ENCODE measurements at regions of chr15 and their contacts with region 1.

Region 1: GRCh38 chr15:40941528-40942336 is 11.5 kb upstream of the CHAC1 start:
- DNase-seq: peak; percentile 78
- ATAC-seq: peak; percentile 81
- H3K4me3 Mint-ChIP-seq: peak overlapping the region; percentile 79
- H3K27ac Mint-ChIP-seq: peak overlapping the region; percentile 74
- H3K4me1 Mint-ChIP-seq: peaks cover 34% of the 10 kb centered on the region
- H3K27me3 Mint-ChIP-seq: no peaks in the 10 kb centered on the region
- CTCF ChIP-seq: peak; percentile 63

Region 2: GRCh38 chr15:40650479-40650878 is 291.3 kb before region 1 on chr15:
- CTCF ChIA-PET with region 1: no interaction called
- POLR2A ChIA-PET with region 1: no interaction called
- intact Hi-C with region 1: no loop called
- DNase-seq: no peak
- ATAC-seq: no peak
- H3K4me3 Mint-ChIP-seq: no peak overlapping the region
- H3K27ac Mint-ChIP-seq: no peak overlapping the region
- H3K4me1 Mint-ChIP-seq: no peaks in the 10 kb centered on the region
- H3K27me3 Mint-ChIP-seq: no peaks in the 10 kb centered on the region
- CTCF ChIP-seq: no peak

Region 3: DNA sequence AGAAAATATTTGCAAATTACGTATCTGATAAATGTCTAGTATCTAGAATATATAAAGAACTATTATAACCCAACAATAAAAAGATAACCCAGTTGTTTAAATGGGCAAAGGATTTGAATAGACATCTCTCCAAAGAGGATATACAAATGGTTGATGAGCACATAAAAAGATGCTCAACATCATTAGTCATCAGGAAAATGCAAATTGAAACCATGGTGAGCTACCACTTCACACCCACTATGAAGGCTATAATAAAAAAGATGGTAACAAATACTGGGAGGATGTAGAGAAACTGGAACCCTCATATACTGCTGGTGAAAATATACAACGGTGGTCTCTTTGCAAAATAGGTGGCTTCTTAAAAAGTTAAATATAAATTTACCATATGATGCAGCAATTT is 218.8 kb before region 1 on chr15:
- CTCF ChIA-PET with region 1: no interaction called
- POLR2A ChIA-PET with region 1: no interaction called
- intact Hi-C with region 1: no loop called
- DNase-seq: no peak
- ATAC-seq: peak; percentile 55
- H3K4me3 Mint-ChIP-seq: no peak overlapping the region
- H3K27ac Mint-ChIP-seq: no peak overlapping the region
- H3K4me1 Mint-ChIP-seq: peaks cover 17% of the 10 kb centered on the region
- H3K27me3 Mint-ChIP-seq: no peaks in the 10 kb centered on the region
- CTCF ChIP-seq: no peak

Region 4: DNA sequence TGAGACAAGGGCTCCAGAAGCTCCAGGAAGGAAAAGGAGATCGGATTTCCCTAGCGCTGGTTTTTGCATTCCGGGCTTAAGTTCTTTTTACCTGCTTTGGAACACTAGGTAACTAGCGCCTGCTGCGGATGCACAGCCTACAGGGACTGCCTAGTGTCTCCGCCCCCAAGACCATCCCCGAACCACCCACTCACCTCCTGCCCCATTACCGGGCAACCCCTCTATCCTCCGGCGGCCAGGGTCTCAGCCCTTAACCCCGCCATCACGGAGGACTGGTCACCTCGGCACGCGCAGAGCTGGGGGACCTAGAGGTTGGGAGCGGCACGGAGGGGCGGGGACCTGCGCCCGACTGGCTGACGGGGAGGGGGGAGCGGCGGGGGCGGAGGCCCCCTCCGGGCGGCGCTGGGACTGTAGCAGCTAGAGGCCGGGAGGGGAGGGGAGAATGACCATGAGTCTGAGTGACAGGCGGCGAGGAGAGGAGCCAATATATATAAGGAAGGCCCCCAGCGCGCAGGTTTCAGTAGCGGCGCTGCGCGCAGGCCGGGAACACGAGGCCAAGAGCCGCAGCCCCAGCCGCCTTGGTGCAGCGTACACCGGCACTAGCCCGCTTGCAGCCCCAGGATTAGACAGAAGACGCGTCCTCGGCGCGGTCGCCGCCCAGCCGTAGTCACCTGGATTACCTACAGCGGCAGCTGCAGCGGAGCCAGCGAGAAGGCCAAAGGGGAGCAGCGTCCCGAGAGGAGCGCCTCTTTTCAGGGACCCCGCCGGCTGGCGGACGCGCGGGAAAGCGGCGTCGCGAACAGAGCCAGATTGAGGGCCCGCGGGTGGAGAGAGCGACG is 12.7 kb before region 1 on chr15 and contains the start of gene DLL4:
- CTCF ChIA-PET with region 1: interaction called, 106 read pairs
- POLR2A ChIA-PET with region 1: interaction called, 43 read pairs
- intact Hi-C with region 1: no loop called
- DNase-seq: peak; percentile 57
- ATAC-seq: peak; percentile 53
- H3K4me3 Mint-ChIP-seq: peak within 1 kb of the TSS; percentile 58
- H3K27ac Mint-ChIP-seq: no peak within 1 kb of the TSS
- H3K4me1 Mint-ChIP-seq: peaks cover 50% of the 10 kb centered on the region
- H3K27me3 Mint-ChIP-seq: peaks cover 65% of the 10 kb centered on the region
- CTCF ChIP-seq: no peak
- total RNA-seq, gene DLL4: not detected

Region 5: DNA sequence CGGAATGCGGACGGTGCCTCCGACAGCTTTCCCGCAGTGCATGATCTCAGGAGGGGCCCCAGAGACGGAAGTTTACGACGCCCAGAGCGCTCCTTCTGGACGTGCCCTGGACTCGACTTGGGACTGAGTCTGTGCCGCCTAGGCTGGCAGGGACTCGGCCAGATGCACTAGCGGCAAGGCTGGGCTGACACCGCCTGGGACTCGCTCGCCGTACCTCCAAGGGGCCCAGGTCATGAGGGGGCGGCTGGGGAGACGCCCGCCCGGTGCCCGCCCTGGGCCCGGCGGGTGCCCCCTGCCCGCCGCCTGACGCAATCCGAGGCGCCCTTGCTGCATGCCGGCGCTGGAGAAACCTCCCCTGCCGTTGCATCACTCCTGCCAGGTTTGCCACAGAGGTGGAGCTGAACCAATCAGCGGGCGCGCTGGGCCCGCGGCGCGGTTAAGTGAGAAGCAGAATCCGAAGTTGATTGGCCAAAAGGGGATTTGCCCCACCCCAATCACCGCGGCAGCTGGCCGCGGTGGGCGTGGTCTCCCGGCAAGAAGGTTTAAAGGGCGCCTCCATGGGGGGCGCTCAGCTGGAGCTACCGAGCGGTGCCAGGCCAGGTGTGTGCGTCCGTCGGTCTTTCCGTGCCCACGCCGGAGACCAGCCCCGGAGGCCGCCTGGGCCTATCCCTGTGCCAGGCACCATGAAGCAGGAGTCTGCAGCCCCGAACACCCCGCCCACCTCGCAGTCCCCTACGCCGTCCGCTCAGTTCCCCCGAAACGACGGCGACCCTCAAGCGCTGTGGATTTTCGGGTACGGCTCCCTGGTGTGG is 11.4 kb after region 1 on chr15 and contains the start of gene CHAC1:
- CTCF ChIA-PET with region 1: interaction called, 73 read pairs
- POLR2A ChIA-PET with region 1: interaction called, 67 read pairs
- intact Hi-C with region 1: no loop called
- DNase-seq: peak; percentile 99
- ATAC-seq: peak; percentile 92
- H3K4me3 Mint-ChIP-seq: peak within 1 kb of the TSS; percentile 94
- H3K27ac Mint-ChIP-seq: peak within 1 kb of the TSS; percentile 95
- H3K4me1 Mint-ChIP-seq: peaks cover 28% of the 10 kb centered on the region
- H3K27me3 Mint-ChIP-seq: no peaks in the 10 kb centered on the region
- CTCF ChIP-seq: no peak
- total RNA-seq, gene CHAC1: 21.9 to 22.6 TPM

Region 6: DNA sequence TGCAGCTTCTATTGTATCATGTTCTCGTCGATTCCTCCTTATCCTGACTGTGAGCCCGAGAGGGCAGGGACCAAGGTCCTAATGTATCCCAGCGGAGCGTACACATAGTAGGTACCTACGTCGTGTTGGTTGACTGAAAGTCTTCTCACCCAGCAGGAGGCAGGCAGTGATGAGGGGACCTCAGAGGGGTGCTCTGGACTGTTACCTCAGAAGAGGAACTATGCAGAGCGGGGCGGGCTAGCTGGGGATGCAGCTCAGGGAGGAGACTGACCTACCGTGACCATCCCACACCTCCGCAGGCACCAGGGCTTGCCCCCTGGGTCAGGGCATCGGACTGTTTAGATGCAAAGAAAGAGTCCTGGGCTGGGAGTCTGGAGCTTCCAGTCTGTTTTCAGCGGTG is 22.9 kb after region 1 on chr15:
- CTCF ChIA-PET with region 1: interaction called, 26 read pairs
- POLR2A ChIA-PET with region 1: interaction called, 3 read pairs
- intact Hi-C with region 1: no loop called
- DNase-seq: no peak
- ATAC-seq: no peak
- H3K4me3 Mint-ChIP-seq: no peak overlapping the region
- H3K27ac Mint-ChIP-seq: no peak overlapping the region
- H3K4me1 Mint-ChIP-seq: no peaks in the 10 kb centered on the region
- H3K27me3 Mint-ChIP-seq: no peaks in the 10 kb centered on the region
- CTCF ChIP-seq: no peak

Region 7: DNA sequence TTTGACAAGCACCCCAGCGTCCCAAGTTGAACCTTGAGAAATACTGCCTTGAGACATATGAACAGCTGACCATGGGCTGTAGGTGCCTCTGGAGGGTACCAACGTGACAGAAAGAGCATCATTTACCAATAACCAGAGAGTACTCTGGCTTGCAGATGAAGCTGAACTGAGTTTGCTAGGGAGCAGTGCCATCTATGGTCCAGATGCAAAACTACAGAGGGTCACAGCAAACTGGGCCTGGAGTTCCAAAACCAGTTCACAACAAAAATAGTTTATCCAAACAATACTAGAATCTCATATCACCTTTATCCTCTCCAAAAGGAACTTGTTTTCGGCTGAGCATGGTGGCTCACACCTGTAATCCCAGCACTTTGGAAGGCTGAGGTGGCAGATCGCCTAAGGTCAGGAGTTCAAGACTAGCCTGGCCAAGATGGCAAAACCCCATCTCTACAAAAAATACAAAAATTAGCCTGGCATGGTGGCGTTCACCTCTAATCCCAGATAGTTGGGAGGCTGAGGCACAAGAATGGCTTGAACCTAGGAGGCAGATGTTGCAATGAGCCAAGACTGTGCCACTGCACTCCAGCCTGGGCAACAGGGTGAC is 80.9 kb after region 1 on chr15:
- CTCF ChIA-PET with region 1: interaction called, 11 read pairs
- POLR2A ChIA-PET with region 1: no interaction called
- intact Hi-C with region 1: no loop called
- DNase-seq: peak; percentile 49
- ATAC-seq: peak; percentile 70
- H3K4me3 Mint-ChIP-seq: no peak overlapping the region
- H3K27ac Mint-ChIP-seq: no peak overlapping the region
- H3K4me1 Mint-ChIP-seq: no peaks in the 10 kb centered on the region
- H3K27me3 Mint-ChIP-seq: no peaks in the 10 kb centered on the region
- CTCF ChIP-seq: peak; percentile 67

Measured in activated CD8-positive, alpha-beta T cell treated with anti-CD3 and anti-CD28 coated beads for 36 hours (primary cell).